HEK293 (cell line): ENCODE measurements at regions of chr6 and their contacts with region 1.

Region 1: DNA sequence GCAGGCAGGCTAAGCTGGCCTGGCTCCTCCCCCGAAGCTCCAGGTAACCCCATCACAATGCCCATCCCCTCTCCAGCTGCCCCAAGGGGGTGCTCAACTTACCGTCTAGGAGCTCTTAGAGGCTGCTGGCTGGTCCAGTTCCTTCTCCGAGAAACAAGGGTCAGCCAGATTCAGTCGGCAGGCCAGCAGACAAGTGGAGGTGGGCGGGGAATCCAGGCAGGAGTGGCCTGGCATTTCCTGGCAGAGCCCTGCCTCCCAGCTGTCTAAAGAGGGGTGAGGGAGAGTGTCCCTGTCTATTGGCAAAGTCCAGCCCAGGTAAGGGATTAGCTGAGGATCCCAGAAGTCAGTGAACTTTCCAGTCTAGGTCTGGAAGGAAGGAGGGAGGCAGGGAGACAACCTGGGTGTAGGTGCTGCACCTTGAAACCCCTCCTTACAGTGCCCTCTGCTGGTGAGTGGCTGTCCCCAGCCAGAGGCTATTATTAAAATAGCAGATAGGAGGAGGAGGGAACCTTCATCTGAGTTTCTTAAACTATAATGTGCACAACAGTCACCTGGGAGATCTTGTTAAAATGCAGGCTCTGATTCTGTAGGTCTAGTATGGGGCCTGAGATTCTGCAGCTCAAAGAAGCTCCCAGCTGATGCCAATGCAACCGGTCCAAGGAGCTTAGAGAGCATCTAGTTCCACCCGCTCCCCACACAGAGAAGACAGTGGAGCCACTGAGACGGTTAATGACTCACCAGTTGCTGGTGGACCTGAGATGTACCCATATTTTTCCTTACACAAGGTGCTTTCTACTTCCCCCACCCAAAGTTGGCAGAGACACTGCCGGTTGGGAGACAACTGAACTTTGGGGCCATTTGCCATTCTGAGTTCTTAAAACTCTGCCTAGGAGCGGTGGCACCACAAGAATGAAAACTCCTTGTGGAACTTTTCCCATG is at the start of gene UNC5CL:
- H3K4me3 ChIP-seq: no peak within 1 kb of the TSS
- H3K27ac ChIP-seq: no peak within 1 kb of the TSS
- H3K4me1 ChIP-seq: no peaks in the 10 kb centered on the region
- CTCF ChIP-seq: no peak

Region 2: GRCh38 chr6:40804905-40805304 is 234.4 kb before region 1 on chr6:
- CTCF ChIA-PET with region 1: no interaction called
- POLR2A ChIA-PET with region 1: no interaction called
- H3K4me3 ChIP-seq: no peak overlapping the region
- H3K27ac ChIP-seq: no peak overlapping the region
- H3K4me1 ChIP-seq: no peaks in the 10 kb centered on the region
- CTCF ChIP-seq: no peak

Region 3: GRCh38 chr6:41051873-41052272 is 12.5 kb after region 1 on chr6:
- CTCF ChIA-PET with region 1: interaction called, 100 read pairs
- POLR2A ChIA-PET with region 1: interaction called, 4 read pairs
- H3K4me3 ChIP-seq: no peak overlapping the region
- H3K27ac ChIP-seq: no peak overlapping the region
- H3K4me1 ChIP-seq: no peaks in the 10 kb centered on the region
- CTCF ChIP-seq: no peak

Region 4: GRCh38 chr6:41159415-41160082 is 120.2 kb after region 1 on chr6:
- CTCF ChIA-PET with region 1: no interaction called
- POLR2A ChIA-PET with region 1: no interaction called
- H3K4me3 ChIP-seq: no peak overlapping the region
- H3K27ac ChIP-seq: no peak overlapping the region
- H3K4me1 ChIP-seq: no peaks in the 10 kb centered on the region
- CTCF ChIP-seq: no peak